Heart right ventricle (tissue), 16 donors: ENCODE measurements at regions of chr5 and their contacts with region 1.

Region 1: DNA sequence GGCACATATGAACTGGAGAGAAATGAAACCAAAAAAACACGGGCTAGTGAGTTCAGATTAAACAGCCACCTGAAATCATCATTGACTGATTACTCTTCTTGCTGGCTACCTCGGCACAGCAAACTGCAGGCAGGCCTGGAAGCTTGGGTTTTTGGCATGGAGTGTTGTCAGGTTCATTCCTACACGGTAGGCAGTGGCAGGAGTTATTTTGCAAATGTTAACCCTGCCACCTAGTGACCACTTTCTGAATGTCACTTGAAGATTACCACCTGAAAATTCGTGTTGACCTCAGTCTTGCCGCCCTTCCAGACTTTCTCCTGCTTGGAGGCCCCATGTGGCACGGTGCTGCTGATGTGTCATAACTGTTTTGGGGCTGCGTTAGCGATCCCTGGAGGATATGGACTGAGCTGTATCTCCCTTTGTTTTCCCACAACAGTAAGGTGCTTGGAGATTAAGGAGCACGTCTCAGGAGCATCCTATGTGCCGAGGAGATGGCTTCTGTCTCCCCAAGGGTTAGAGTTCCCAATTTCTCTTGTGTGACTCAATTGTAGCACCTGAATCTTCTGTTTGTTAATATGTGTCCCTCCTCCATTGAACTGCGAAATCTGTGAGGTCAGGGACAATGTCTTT is 12.7 kb upstream of the CD180 start:
- DNase-seq: peak in 1 of 2 donors; percentile 80
- ATAC-seq: peak; percentile 69 to 87 (median 84)
- H3K4me3 ChIP-seq: no peak overlapping the region
- H3K27ac ChIP-seq: peak overlapping the region in 1 of 10 donors; percentile 84
- H3K4me1 ChIP-seq: peaks cover 0 to 54% (median 6%) of the 10 kb centered on the region in 9 donors
- H3K27me3 ChIP-seq: no peaks in the 10 kb centered on the region
- CTCF ChIP-seq: peak; percentile 62 to 88 (median 81)

Region 2: GRCh38 chr5:66171349-66172344 is 1037.6 kb before region 1 on chr5:
- intact Hi-C with region 1: loop called in 1 of 10 experiments (anchors 10 kb)
- DNase-seq: peak in 1 of 2 donors; percentile 22
- ATAC-seq: peak in 1 of 8 donors; percentile 53
- H3K4me3 ChIP-seq: no peak overlapping the region
- H3K27ac ChIP-seq: no peak overlapping the region
- H3K4me1 ChIP-seq: peaks cover 0 to 13% (median 0%) of the 10 kb centered on the region in 9 donors
- H3K27me3 ChIP-seq: no peaks in the 10 kb centered on the region
- CTCF ChIP-seq: peak; percentile 15 to 69 (median 60)

Region 3: GRCh38 chr5:66814146-66814991 is 394.9 kb before region 1 on chr5:
- intact Hi-C with region 1: loop called in 9 of 10 experiments (anchors 5 to 10 kb)
- DNase-seq: peak in 1 of 2 donors; percentile 51
- ATAC-seq: peak in 1 of 8 donors; percentile 30
- H3K4me3 ChIP-seq: no peak overlapping the region
- H3K27ac ChIP-seq: no peak overlapping the region
- H3K4me1 ChIP-seq: peaks cover 0 to 16% (median 8%) of the 10 kb centered on the region in 9 donors
- H3K27me3 ChIP-seq: no peaks in the 10 kb centered on the region
- CTCF ChIP-seq: peak; percentile 40 to 83 (median 78)

Region 4: GRCh38 chr5:66877843-66878242 is 331.4 kb before region 1 on chr5:
- intact Hi-C with region 1: no loop called
- DNase-seq: no peak
- ATAC-seq: no peak
- H3K4me3 ChIP-seq: no peak overlapping the region
- H3K27ac ChIP-seq: no peak overlapping the region
- H3K4me1 ChIP-seq: peaks cover 5 to 31% (median 24%) of the 10 kb centered on the region in 9 donors
- H3K27me3 ChIP-seq: no peaks in the 10 kb centered on the region
- CTCF ChIP-seq: no peak

Region 5: DNA sequence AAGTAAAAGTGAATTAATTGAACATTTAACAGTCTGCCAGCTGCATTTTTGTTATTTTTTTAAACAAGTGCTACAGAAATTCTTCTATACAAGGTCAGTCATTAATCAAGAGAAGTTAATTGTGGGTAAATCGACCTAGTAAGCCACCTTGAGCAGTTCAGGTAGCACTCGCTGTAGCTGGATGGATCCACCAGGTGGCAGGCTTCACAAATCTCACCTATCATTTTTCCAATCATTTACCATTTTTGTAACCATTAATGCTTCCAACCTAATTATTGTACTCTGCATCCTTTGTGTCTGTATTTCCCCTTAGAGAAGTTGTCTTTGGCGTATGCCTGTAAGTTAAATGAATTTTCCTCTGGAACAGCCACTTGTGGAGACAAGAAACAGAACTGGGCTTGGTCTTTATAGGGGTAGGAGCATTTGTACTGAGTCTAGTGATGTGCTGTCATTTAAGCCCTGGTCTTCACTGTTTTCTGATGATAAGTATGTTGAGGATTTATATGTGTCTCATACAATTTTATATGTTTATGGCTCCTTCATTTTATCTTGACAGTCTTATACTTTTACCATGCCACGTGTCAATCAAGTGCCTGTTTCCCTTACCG is 52.2 kb before region 1 on chr5:
- intact Hi-C with region 1: loop called in 3 of 10 experiments (anchors 2 to 10 kb)
- DNase-seq: no peak
- ATAC-seq: peak in 1 of 8 donors; percentile 31
- H3K4me3 ChIP-seq: no peak overlapping the region
- H3K27ac ChIP-seq: no peak overlapping the region
- H3K4me1 ChIP-seq: peaks cover 0 to 21% (median 10%) of the 10 kb centered on the region in 9 donors
- H3K27me3 ChIP-seq: no peaks in the 10 kb centered on the region
- CTCF ChIP-seq: peak; percentile 49 to 84 (median 74)

Region 6: DNA sequence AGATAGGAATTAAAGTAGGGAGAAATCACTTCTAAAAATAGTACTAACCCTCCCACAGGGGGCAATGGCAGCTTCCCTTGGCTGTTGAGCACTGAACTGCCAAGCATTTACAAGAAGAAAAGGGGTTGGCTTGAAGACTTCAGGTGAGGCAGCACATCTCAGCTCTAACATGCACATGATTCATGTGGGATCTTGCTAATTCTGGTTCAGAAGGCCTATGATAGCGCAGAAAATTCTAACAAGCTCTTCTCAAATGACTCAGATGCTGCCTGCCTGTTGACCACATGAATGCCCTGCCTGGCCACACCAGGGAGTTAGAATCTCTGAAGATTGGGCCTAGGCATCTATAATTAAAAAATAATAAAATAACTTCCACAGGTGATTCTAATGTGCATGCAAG is 35.3 kb before region 1 on chr5:
- intact Hi-C with region 1: loop called in 6 of 10 experiments (anchors 5 kb)
- DNase-seq: no peak
- ATAC-seq: no peak
- H3K4me3 ChIP-seq: no peak overlapping the region
- H3K27ac ChIP-seq: no peak overlapping the region
- H3K4me1 ChIP-seq: peaks cover 0 to 25% (median 0%) of the 10 kb centered on the region in 9 donors
- H3K27me3 ChIP-seq: no peaks in the 10 kb centered on the region
- CTCF ChIP-seq: no peak